ENCODE measurements at regions of chr21 and their contacts with region 1.

Region 1: GRCh38 chr21:44510508-44511210 is 29.3 kb downstream of the KRTAP10-1 start:
- DNase-seq: no peak
- ATAC-seq: peak; percentile 95
- H3K4me3 ChIP-seq: no peak overlapping the region
- H3K27ac ChIP-seq: no peak overlapping the region
- H3K4me1 ChIP-seq: no peaks in the 10 kb centered on the region
- H3K27me3 ChIP-seq: no peaks in the 10 kb centered on the region; a peak in 1 of 4 replicates
- CTCF ChIP-seq: peak; percentile 72 to 87 (median 82)
- EP300 ChIP-seq: no peak
- POLR2A ChIP-seq: no peak
- RAD21 ChIP-seq: peak; percentile 91

Region 2: GRCh38 chr21:42594616-42595282 is 1915.9 kb before region 1 on chr21:
- CTCF ChIA-PET with region 1: no interaction called
- POLR2A ChIA-PET with region 1: no interaction called
- RAD21 ChIA-PET with region 1: no interaction called
- SMC1A ChIA-PET with region 1: no interaction called
- in situ Hi-C with region 1: no loop called
- intact Hi-C with region 1: no loop called
- DNase-seq: no peak
- ATAC-seq: no peak; the same call in 2 of the 3 replicates
- H3K4me3 ChIP-seq: no peak overlapping the region
- H3K27ac ChIP-seq: no peak overlapping the region
- H3K4me1 ChIP-seq: no peaks in the 10 kb centered on the region
- H3K27me3 ChIP-seq: no peaks in the 10 kb centered on the region
- CTCF ChIP-seq: no peak
- EP300 ChIP-seq: no peak
- POLR2A ChIP-seq: no peak
- RAD21 ChIP-seq: no peak

Region 3: GRCh38 chr21:44500111-44500510 is 10.5 kb before region 1 on chr21:
- CTCF ChIA-PET with region 1: interaction called, 12 read pairs
- POLR2A ChIA-PET with region 1: no interaction called
- RAD21 ChIA-PET with region 1: no interaction called
- SMC1A ChIA-PET with region 1: no interaction called
- in situ Hi-C with region 1: no loop called
- intact Hi-C with region 1: no loop called
- DNase-seq: no peak
- ATAC-seq: no peak
- H3K4me3 ChIP-seq: no peak overlapping the region
- H3K27ac ChIP-seq: no peak overlapping the region
- H3K4me1 ChIP-seq: no peaks in the 10 kb centered on the region
- H3K27me3 ChIP-seq: no peaks in the 10 kb centered on the region; a peak in 1 of 4 replicates
- CTCF ChIP-seq: no peak
- EP300 ChIP-seq: no peak
- POLR2A ChIP-seq: no peak
- RAD21 ChIP-seq: no peak

Region 4: DNA sequence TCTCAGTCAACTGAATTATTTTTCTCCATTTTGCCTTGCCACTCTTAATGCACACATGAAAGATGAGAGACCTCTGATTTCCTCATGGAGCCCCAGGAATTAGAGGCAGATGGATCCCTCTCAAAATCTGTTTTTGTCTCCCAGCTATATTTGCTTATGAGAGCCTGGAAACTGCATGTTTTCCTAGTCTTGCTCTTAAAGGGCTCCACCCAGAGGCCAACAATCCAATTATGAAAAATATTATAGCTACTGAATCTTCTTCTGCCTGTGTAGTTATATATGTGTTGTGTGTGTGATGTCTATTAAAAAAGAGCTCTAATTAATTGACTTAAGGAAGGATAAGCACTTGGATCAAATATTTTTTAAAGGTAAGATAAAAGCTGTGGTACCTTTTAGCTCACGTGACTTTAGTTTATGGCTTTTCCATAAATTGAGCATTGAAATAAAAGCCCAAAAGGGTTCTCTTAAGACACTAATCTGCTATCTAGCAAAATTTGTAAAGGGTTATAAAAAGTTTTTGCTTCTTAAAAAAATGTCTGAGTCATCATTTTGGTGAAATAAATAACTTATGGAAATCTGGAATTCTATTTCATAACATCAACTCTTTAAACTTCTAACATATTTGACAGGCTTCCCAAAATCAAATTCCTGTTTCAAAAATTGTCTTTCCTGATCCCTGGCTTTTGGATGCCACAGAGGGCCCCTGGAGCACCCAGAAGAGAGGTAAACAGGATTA is 231.9 kb after region 1 on chr21:
- CTCF ChIA-PET with region 1: interaction called, 30 read pairs
- POLR2A ChIA-PET with region 1: no interaction called
- RAD21 ChIA-PET with region 1: interaction called, 9 read pairs
- SMC1A ChIA-PET with region 1: interaction called, 11 read pairs
- in situ Hi-C with region 1: no loop called
- intact Hi-C with region 1: no loop called
- DNase-seq: no peak
- ATAC-seq: no peak
- H3K4me3 ChIP-seq: no peak overlapping the region
- H3K27ac ChIP-seq: no peak overlapping the region
- H3K4me1 ChIP-seq: no peaks in the 10 kb centered on the region
- H3K27me3 ChIP-seq: no peaks in the 10 kb centered on the region
- CTCF ChIP-seq: peak in 2 of 3 experiments; percentile 23 to 26; a peak in 4 of 6 replicates
- EP300 ChIP-seq: no peak
- POLR2A ChIP-seq: no peak
- RAD21 ChIP-seq: peak; percentile 46